ENCODE measurements at regions of chr1 and their contacts with region 1.

Region 1: DNA sequence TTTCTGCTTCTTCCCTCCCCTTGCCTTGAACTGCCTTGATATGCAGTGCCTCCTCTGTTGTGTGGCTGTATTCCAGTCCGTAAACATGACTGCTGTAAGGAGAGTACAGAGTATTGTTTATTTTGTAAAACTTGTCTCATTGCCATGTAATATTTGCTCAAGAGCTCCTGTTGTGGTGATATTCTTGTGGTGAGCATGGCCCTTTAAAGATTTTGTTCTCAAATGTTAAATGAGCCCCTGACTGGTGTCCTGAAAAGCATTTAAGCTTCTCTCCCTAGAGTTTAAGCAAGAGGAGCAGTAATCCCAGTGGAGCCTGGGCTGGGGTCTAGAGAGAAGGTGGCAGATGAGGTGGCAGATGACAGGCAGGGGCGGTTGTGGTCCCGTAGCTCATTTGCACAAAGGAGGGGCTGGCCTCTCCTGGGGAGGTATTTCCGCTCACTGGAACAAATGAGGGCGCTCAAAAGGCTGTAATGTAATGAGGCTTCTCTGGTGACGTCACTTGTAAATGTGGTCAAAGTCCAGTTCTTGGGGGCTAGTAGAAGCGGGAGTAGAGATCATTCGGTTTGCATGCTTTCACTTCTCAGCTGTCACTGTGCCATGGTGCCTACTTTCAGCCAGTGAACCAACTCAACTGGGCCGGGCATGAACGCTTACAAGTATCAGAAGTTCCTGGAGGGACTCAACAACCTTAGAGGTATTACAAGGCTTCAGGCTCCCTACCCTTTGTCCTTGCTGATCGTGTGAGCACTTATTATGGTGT is 46.0 kb upstream of the MACF1 start:
- DNase-seq: peak; percentile 22 to 85
- ATAC-seq: peak; percentile 85 to 87
- H3K4me3 ChIP-seq: peak overlapping the region; percentile 48
- H3K27ac ChIP-seq: peak overlapping the region; percentile 69 to 71
- H3K4me1 ChIP-seq: peaks cover 55% of the 10 kb centered on the region
- CTCF ChIP-seq: no peak
- EP300 ChIP-seq: no peak
- POLR2A ChIP-seq: no peak
- RAD21 ChIP-seq: no peak

Region 2: GRCh38 chr1:39132505-39133339 is 25.8 kb before region 1 on chr1:
- CTCF ChIA-PET with region 1: interaction called, 12 read pairs
- POLR2A ChIA-PET with region 1: interaction called, 3 read pairs
- DNase-seq: peak; percentile 22 to 55
- ATAC-seq: peak; percentile 55 to 80; a peak in 5 of 6 replicates
- H3K4me3 ChIP-seq: no peak overlapping the region
- H3K27ac ChIP-seq: peak overlapping the region; percentile 65 to 82
- H3K4me1 ChIP-seq: peaks cover 64% of the 10 kb centered on the region
- CTCF ChIP-seq: no peak
- EP300 ChIP-seq: no peak
- POLR2A ChIP-seq: no peak
- RAD21 ChIP-seq: no peak